Body of pancreas (tissue), 4 donors: ENCODE measurements at regions of chr1 and their contacts with region 1.

Region 1: DNA sequence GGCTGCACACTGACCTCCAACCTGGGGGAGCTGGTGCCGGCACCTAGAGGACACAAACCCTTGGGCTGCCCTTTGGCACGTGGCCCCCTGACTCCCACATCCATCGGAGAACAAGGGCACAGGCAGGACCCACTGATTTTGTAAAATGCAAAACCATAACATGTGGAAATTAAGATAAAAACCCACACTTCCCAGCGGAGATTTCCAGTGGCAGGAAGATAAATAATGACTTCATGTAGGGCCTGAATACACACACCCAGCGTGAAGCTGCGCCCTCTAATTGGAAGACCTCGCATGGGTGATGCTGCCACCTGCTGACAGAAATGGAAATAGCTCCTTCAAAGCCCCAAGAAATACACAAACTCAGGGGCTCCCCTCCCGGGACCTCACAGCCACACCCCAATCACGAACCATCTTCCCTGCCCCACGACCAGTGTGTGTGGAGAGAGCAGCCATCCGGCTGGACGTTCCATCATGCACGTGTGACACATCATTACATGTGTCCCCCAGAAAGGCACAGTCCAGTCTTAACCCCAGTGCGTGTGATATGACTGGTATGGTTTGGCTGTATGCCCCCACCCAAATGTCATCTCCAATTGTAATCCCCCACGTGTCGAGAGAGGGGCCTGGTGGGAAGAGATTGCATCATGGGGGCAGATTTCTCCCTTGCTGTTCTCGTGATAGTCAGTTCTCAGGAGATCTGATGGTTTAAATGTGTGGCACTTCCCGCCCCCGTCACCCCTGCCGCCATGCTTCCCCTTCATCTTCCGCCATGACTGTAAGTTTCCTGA is 5.7 kb upstream of the TPRG1L start:
- DNase-seq: peak; percentile 76 to 82 (median 80)
- ATAC-seq: peak; percentile 84
- H3K4me3 ChIP-seq: no peak overlapping the region
- H3K27ac ChIP-seq: no peak overlapping the region
- H3K4me1 ChIP-seq: peaks cover 25% of the 10 kb centered on the region
- H3K27me3 ChIP-seq: no peaks in the 10 kb centered on the region
- CTCF ChIP-seq: peak; percentile 72 to 87 (median 81)
- POLR2A ChIP-seq: no peak

Region 2: GRCh38 chr1:3453203-3453761 is 165.8 kb before region 1 on chr1:
- intact Hi-C with region 1: loop called (anchors 5 kb)
- DNase-seq: peak; percentile 77 to 86 (median 84)
- ATAC-seq: peak; percentile 78
- H3K4me3 ChIP-seq: no peak overlapping the region
- H3K27ac ChIP-seq: peak overlapping the region in 3 of 4 donors; percentile 74 to 85 (median 82)
- H3K4me1 ChIP-seq: peaks cover 31% of the 10 kb centered on the region
- H3K27me3 ChIP-seq: no peaks in the 10 kb centered on the region
- CTCF ChIP-seq: peak; percentile 94 to 98 (median 95)
- POLR2A ChIP-seq: no peak

Region 3: DNA sequence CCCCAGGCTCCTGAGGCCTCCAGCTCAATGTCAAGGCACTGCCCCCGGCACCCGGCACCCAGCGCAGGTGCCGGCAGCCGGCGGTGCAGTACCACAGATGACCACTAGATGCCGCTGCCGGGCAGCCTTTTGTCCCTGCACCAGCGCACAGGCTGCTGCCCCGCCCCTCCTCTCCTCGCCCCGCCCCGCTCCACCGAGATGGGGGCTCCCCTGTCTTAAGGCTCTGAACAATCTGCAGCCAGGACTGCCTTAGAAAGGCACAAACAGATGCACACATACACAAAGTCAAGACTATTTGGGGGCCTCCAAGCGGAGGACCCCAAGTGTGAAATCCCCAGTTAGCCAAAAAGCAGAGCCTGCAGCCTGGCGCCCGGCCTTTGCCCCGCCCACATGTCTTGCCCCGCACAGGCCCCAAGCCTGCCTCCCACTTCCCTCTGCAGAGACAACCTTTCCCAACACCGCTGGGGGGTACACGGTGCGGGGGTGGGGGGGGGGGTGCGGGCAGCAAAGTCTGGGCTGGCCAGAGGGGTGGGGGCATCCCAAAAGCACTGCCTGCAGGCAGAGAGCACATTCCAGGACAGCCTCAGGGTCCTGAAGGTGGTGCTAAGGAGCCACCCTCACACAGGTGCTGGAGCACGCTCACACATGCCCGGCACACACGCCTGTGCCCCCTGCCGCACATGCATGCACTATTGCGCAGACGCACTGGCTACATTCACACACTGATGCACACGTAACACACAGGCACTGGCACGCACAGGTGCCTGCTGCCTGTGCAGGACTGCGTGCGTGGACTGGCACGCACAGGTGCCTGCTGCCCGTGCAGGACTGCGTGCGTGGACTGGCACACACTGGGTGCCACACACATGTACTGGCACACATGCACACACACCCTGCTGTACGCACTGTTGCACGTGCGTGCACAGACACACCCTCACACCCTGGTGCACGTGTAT is 127.5 kb before region 1 on chr1:
- intact Hi-C with region 1: loop called (anchors 2 kb)
- DNase-seq: peak; percentile 71 to 85 (median 74)
- ATAC-seq: peak; percentile 81
- H3K4me3 ChIP-seq: no peak overlapping the region
- H3K27ac ChIP-seq: no peak overlapping the region
- H3K4me1 ChIP-seq: peaks cover 7% of the 10 kb centered on the region
- H3K27me3 ChIP-seq: no peaks in the 10 kb centered on the region
- CTCF ChIP-seq: peak; percentile 89 to 100 (median 95)
- POLR2A ChIP-seq: no peak